ENCODE measurements at regions of chr12 and their contacts with region 1.

Region 1: GRCh38 chr12:27969624-27970400 is 2.7 kb downstream of the PTHLH start:
- DNase-seq: peak; percentile 53
- ATAC-seq: peak; percentile 49
- H3K4me3 ChIP-seq: peak overlapping the region; percentile 54
- H3K27ac ChIP-seq: peak overlapping the region; percentile 39; the same call in 1 of the 2 replicates
- H3K4me1 ChIP-seq: peaks cover 2% of the 10 kb centered on the region
- H3K27me3 ChIP-seq: peaks cover under 1% of the 10 kb centered on the region; the same call in 1 of the 2 replicates
- CTCF ChIP-seq: peak; percentile 34
- POLR2A ChIP-seq: peak; percentile 66
- RAD21 ChIP-seq: peak; percentile 44

Region 2: GRCh38 chr12:28172434-28173030 is 202.7 kb after region 1 on chr12:
- CTCF ChIA-PET with region 1: no interaction called
- POLR2A ChIA-PET with region 1: no interaction called
- dilution Hi-C with region 1: no loop called
- in situ Hi-C with region 1: loop called (anchors 10 kb)
- intact Hi-C with region 1: loop called (anchors 1 kb)
- DNase-seq: peak; percentile 68
- ATAC-seq: peak; percentile 93
- H3K4me3 ChIP-seq: no peak overlapping the region
- H3K27ac ChIP-seq: no peak overlapping the region
- H3K4me1 ChIP-seq: no peaks in the 10 kb centered on the region
- H3K27me3 ChIP-seq: no peaks in the 10 kb centered on the region
- CTCF ChIP-seq: peak; percentile 80
- POLR2A ChIP-seq: no peak
- RAD21 ChIP-seq: peak; percentile 91

Region 3: DNA sequence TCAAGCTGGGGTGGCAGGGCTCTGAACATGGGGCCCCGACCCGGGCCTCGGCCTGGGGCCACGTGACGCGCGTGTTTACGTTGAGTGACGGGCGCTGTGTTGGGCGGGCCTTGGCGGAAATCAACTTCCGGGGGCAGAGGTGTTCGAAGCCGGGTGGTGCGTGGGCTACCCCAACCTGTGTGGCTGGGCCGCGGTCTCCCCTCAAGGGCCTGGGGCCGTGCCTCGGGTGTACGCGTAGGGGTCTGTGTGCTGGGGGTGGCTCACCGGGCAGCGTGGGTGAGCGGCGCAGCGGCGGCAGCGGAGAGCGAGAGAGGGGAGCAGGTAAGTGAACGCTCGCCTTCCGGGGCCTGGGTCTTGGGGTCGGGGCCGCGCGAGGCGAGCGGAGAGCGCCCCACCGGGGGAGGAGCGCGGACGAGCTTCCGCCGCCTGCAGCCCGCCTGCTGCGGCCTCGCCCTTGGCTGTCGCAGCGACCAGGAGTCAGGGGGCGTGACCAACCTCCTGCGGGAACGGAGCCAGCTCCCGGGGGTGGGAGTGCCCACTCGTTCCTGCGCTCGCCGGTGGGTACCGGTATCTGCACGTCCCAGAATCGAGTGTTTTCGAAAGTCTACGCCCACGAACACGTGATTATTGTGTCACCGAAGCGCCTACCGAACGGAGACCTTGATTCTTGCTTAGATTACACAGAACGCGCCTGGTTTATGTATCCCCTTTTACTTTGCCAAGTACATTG is 220.7 kb after region 1 on chr12 and contains the start of gene CCDC91:
- CTCF ChIA-PET with region 1: no interaction called
- POLR2A ChIA-PET with region 1: no interaction called
- dilution Hi-C with region 1: no loop called
- in situ Hi-C with region 1: no loop called
- intact Hi-C with region 1: loop called (anchors 5 kb)
- DNase-seq: peak; percentile 77
- ATAC-seq: peak; percentile 89
- H3K4me3 ChIP-seq: peak within 1 kb of the TSS; percentile 81
- H3K27ac ChIP-seq: peak within 1 kb of the TSS; percentile 93
- H3K4me1 ChIP-seq: peaks cover 5% of the 10 kb centered on the region
- H3K27me3 ChIP-seq: no peaks in the 10 kb centered on the region
- CTCF ChIP-seq: no peak
- POLR2A ChIP-seq: peak; percentile 70
- RAD21 ChIP-seq: no peak
- total RNA-seq, gene CCDC91: 14.7 and 17.5 TPM in 2 replicates

Region 4: DNA sequence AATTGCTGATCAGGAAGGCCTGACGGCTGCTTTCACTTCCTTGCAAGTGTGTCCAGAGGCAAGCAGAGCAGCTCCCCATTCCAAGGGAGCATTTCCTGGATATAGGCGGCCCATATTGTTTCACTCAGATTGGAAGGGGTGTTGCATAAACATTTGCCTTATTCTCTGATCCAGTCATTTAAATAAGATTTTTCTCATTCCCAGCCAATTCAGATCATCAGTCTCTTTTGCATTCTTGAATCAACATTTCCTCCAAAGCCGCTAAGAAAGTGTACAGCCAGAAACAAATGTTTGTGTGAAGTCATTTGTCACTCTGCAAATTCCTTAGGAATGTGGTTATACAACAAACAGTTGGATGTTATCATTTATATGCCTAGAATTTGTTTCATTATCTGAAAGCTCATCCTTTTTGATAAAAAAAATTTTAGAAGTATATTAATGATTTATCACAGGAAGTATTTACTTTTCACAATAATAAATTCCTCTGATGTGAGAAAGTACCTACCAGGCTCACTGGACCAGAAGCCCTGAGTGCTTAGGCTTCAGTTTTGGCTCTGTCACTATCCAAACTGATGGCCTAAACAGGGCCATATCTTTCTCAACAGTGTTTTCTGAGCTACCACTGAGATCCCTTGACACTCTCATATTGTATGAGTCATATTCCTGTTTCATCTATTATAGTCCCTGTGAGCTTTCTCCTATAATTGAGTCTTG is 600.0 kb after region 1 on chr12:
- CTCF ChIA-PET with region 1: no interaction called
- POLR2A ChIA-PET with region 1: no interaction called
- dilution Hi-C with region 1: no loop called
- in situ Hi-C with region 1: no loop called
- intact Hi-C with region 1: loop called (anchors 2 kb)
- DNase-seq: peak; percentile 80
- ATAC-seq: peak; percentile 82
- H3K4me3 ChIP-seq: no peak overlapping the region
- H3K27ac ChIP-seq: peak overlapping the region; percentile 86
- H3K4me1 ChIP-seq: peaks cover 14% of the 10 kb centered on the region
- H3K27me3 ChIP-seq: no peaks in the 10 kb centered on the region
- CTCF ChIP-seq: no peak
- POLR2A ChIP-seq: no peak
- RAD21 ChIP-seq: no peak

Region 5: DNA sequence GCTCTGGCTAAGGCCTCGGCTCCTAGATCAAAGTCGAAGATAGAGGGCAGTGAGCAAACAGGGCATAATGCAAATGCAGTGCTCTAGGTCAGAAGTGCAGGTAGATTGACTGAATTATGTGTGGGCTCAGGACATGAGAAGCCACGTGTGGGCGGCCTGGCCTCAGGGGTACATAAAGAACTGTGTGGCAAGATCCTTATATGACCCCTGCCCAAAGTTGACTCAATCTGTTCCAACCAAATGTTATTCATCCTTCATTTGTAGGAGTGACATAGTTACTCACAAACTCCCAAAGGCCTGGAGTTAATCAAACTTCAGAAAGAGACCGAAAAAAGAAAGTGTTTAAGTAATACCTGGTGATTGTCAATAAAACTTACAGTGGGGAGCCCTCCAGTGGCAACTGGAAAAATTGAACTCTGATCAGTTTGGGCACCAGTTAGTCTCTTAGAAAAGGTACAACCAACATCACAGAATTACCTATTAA is 1028.9 kb after region 1 on chr12:
- CTCF ChIA-PET with region 1: no interaction called
- POLR2A ChIA-PET with region 1: no interaction called
- dilution Hi-C with region 1: no loop called
- in situ Hi-C with region 1: no loop called
- intact Hi-C with region 1: loop called (anchors 10 kb)
- DNase-seq: peak; percentile 56
- ATAC-seq: peak; percentile 88
- H3K4me3 ChIP-seq: no peak overlapping the region
- H3K27ac ChIP-seq: no peak overlapping the region
- H3K4me1 ChIP-seq: no peaks in the 10 kb centered on the region
- H3K27me3 ChIP-seq: no peaks in the 10 kb centered on the region
- CTCF ChIP-seq: peak; percentile 61
- POLR2A ChIP-seq: no peak
- RAD21 ChIP-seq: peak; percentile 64